IMR-90 (cell line): ENCODE measurements at regions of chr1 and their contacts with region 1.

Region 1: GRCh38 chr1:92447033-92447681 is 39.6 kb downstream of the GFI1 start:
- DNase-seq: peak; percentile 35
- ATAC-seq: peak; percentile 50
- H3K4me3 ChIP-seq: no peak overlapping the region
- H3K27ac ChIP-seq: no peak overlapping the region
- H3K4me1 ChIP-seq: peaks cover 12% of the 10 kb centered on the region
- H3K27me3 ChIP-seq: no peaks in the 10 kb centered on the region
- CTCF ChIP-seq: no peak
- POLR2A ChIP-seq: no peak
- RAD21 ChIP-seq: no peak

Region 2: DNA sequence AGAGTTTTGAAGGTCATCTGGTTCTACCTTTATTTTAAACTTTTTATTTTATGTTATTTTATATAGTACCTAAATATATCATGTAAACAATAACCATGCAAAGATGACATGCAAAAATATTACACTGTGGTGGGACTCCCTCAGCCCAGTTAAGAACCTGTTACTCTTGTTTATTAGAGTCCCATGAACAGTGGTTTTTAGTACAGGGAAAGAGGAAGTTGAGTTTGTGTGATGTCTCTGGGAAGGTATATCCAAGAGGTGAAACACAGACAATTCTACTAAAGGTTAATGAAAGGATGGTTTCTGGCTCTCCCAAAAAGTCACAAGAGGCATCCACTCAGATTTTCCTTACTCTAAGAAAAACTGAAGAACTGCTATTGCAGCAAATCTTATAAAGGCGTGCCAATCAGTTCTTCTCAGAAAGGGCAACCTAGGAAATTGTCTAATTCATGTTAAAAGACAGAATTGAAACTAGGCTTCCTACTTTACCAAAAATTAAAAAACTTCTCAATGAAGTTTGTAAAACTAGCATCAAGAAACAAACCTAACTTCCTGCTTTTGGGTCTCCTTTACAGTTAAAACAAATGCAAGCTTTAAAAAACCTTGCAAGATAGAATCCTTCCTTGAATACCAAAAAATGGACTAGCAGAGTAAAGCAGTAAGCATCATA is 19.7 kb after region 1 on chr1:
- CTCF ChIA-PET with region 1: no interaction called
- POLR2A ChIA-PET with region 1: no interaction called
- dilution Hi-C with region 1: no loop called
- in situ Hi-C with region 1: no loop called
- intact Hi-C with region 1: loop called (anchors 2 kb)
- DNase-seq: no peak
- ATAC-seq: no peak
- H3K4me3 ChIP-seq: no peak overlapping the region
- H3K27ac ChIP-seq: no peak overlapping the region
- H3K4me1 ChIP-seq: no peaks in the 10 kb centered on the region
- H3K27me3 ChIP-seq: peaks cover 2% of the 10 kb centered on the region; the same call in 1 of the 2 replicates
- CTCF ChIP-seq: no peak
- POLR2A ChIP-seq: no peak
- RAD21 ChIP-seq: no peak

Region 3: DNA sequence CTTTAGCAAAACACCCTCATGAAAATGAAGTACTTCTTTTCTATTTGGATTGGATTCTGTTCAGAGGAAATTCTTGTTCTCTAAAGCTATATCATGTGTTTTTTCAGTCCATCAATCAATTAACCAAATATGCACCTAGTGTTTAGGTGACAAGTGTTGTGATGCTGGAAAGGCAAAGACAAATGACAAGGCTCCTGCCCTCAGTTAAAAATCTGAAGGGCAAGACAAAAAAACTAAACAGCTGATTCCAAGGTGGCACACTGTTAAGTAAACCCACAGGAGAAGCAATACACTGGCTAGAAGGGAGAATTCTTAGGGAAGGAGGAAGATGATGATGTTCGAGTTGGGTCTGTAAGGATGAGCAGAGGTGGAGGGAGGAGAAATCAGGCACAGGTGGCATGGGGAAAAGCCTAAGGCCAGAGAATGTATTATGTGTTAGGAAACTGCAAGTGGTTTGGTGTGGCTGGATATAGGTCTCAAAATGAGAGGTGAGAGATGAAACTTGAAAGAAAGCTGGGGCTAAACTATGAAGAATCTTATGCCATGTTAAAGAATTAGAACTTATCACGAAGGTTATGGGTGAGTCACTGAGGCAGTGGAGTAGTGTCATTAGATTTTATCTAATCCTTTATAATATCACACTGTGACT is 91.4 kb after region 1 on chr1:
- CTCF ChIA-PET with region 1: no interaction called
- POLR2A ChIA-PET with region 1: no interaction called
- dilution Hi-C with region 1: no loop called
- in situ Hi-C with region 1: no loop called
- intact Hi-C with region 1: no loop called
- DNase-seq: peak; percentile 15
- ATAC-seq: no peak
- H3K4me3 ChIP-seq: no peak overlapping the region
- H3K27ac ChIP-seq: no peak overlapping the region
- H3K4me1 ChIP-seq: peaks cover 3% of the 10 kb centered on the region; the same call in 1 of the 2 replicates
- H3K27me3 ChIP-seq: no peaks in the 10 kb centered on the region
- CTCF ChIP-seq: no peak
- POLR2A ChIP-seq: no peak
- RAD21 ChIP-seq: no peak

Region 4: DNA sequence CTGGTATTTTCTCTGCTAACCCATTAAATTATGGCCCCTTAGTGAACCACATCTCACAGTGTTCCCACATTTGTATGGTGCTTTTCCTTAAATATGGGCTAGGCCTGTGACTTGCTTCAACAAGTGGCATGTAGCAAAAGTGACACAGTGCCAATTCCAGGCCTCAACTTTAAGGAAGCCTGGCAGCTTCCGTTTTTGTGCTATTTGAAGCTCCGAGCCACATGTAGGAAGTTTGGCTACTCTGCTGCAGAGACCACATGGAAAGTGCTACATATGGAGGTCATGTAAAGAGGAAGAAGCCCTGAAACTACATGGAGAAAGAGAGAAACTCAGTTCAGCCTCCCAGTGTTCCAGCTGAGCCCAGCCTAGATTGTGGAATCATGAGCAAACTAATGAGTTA is 870.0 kb after region 1 on chr1:
- CTCF ChIA-PET with region 1: no interaction called
- POLR2A ChIA-PET with region 1: no interaction called
- dilution Hi-C with region 1: no loop called
- in situ Hi-C with region 1: no loop called
- intact Hi-C with region 1: no loop called
- DNase-seq: no peak
- ATAC-seq: no peak
- H3K4me3 ChIP-seq: no peak overlapping the region
- H3K27ac ChIP-seq: no peak overlapping the region
- H3K4me1 ChIP-seq: no peaks in the 10 kb centered on the region
- H3K27me3 ChIP-seq: no peaks in the 10 kb centered on the region
- CTCF ChIP-seq: no peak
- POLR2A ChIP-seq: no peak
- RAD21 ChIP-seq: no peak